ENCODE measurements at regions of chr4 and their contacts with region 1.

Region 1: DNA sequence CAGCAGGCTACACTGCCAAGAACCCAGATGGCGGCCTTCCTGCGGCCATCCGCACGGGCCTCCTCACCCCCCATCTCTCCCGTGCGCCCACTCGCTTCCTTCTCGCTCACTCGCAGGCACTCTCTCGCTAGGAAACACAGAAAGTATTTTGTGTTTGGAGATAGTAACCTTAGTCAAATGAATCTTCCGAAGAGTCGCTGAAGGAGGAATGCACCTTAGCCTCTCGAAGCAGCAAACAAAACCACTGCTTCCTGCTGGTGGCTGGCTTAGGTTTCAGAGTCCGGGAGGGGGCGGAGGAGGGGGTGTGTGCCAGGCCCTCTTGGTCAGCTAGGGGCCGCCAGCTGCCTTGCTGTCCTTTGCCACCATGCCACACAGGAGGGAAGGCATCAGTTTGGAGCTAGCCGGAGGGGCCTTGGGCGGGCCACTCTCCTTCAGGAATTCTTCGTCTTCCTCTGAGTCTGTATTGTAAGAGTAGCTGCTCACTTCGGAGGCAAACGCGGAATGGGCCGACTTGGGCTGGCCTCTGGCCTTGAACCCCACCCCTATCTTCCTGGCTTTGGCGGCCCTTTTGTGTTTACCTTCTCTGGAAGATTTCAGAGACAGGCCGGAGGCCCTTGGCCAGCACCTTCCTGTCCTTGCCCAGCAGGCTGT is 73.2 kb upstream of the UCP1 start:
- DNase-seq: peak; percentile 69 to 78 (median 72)
- H3K4me3 ChIP-seq: peak overlapping the region; percentile 16
- H3K27ac ChIP-seq: peak overlapping the region; percentile 44 to 81
- H3K4me1 ChIP-seq: peaks cover 11% of the 10 kb centered on the region
- H3K27me3 ChIP-seq: no peaks in the 10 kb centered on the region
- CTCF ChIP-seq: peak in 2 of 3 donors; percentile 10 to 47
- EP300 ChIP-seq: no peak
- POLR2A ChIP-seq: no peak

Region 2: DNA sequence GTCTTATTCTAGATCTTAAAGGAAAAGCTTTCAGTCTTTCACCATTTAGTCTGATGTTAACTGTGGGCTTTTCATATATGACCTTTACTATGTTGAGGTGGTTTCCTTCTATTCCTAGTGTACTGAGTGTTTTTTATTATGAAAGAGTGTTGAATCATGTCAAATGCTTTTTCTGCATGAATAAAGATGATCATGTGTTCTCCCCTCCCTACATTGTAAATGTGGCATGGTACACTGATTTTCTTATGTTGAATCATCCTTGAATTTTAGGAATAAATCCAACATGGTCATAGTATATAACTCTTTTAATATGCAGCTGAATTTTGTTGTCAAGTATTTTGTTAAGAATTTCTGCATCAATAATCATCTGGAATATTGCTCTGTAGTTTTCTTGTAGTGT is 218.8 kb before region 1 on chr4:
- intact Hi-C with region 1: no loop called
- DNase-seq: no peak
- H3K4me3 ChIP-seq: no peak overlapping the region
- H3K27ac ChIP-seq: no peak overlapping the region
- H3K4me1 ChIP-seq: peaks cover 5% of the 10 kb centered on the region
- H3K27me3 ChIP-seq: no peaks in the 10 kb centered on the region
- CTCF ChIP-seq: no peak
- EP300 ChIP-seq: no peak
- POLR2A ChIP-seq: no peak

Region 3: GRCh38 chr4:140523857-140524742 is 117.8 kb before region 1 on chr4 and contains the start of gene ELMOD2:
- intact Hi-C with region 1: no loop called
- DNase-seq: peak; percentile 97 to 99 (median 98)
- H3K4me3 ChIP-seq: peak within 1 kb of the TSS; percentile 83
- H3K27ac ChIP-seq: peak within 1 kb of the TSS in 1 of 2 donors; percentile 76
- H3K4me1 ChIP-seq: peaks cover 3% of the 10 kb centered on the region
- H3K27me3 ChIP-seq: no peaks in the 10 kb centered on the region
- CTCF ChIP-seq: peak; percentile 91 to 97 (median 92)
- EP300 ChIP-seq: no peak
- POLR2A ChIP-seq: no peak
- total RNA-seq, gene ELMOD2: 13.6 to 22.3 (median 15.9) TPM

Region 4: DNA sequence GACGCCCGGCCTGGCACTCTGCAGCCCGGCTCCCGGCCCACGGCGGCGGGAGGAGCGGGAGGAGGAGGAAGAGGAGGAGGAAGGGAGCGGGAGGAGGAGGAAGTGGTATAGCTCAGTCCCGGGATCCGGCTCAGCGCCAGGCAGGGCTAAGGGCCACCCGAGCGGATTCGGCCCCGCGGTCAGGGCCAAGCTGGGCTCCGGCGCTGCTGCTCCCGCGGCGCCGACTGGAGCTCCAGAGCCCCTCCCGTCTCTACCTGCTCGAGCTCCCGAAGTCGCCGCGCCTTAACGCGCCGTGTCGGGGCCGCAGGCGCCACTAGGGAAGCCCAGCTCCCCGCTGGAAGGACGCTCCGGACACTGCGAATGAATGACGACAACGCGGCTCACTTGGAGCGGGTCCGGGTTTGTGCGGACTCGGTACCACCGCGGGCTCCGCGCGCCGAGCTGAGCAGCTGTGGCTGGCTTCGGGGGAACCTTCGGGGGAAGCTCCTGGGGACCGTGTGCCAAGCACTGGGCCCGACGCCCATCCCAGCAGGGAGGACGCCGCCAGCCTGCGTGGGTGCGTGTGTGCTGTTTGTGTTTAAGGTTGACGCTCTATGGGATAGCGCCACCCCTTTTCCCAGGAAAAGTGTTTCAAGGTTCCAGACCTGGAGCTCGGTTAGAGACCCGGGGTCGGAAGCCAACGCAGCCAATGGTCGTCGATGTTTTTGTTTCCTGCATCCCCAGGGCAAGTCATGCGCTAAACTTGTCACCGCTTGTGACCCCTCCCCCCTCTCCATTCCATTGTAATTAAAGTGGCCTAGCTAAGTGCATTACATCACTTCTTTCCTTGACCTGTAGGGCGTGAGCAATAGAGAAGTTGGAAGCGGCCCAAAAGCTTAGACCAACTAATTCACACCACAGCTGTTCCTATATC is 114.7 kb after region 1 on chr4 and contains the start of gene TBC1D9:
- intact Hi-C with region 1: loop called in 2 of 4 experiments (anchors 5 to 10 kb)
- DNase-seq: peak; percentile 75 to 85 (median 84)
- H3K4me3 ChIP-seq: peak within 1 kb of the TSS; percentile 69
- H3K27ac ChIP-seq: peak within 1 kb of the TSS; percentile 87 to 91
- H3K4me1 ChIP-seq: no peaks in the 10 kb centered on the region
- H3K27me3 ChIP-seq: no peaks in the 10 kb centered on the region
- CTCF ChIP-seq: no peak
- EP300 ChIP-seq: no peak
- POLR2A ChIP-seq: peak; percentile 65
- total RNA-seq, gene TBC1D9: 14.9 to 28.8 (median 21.4) TPM

Region 5: DNA sequence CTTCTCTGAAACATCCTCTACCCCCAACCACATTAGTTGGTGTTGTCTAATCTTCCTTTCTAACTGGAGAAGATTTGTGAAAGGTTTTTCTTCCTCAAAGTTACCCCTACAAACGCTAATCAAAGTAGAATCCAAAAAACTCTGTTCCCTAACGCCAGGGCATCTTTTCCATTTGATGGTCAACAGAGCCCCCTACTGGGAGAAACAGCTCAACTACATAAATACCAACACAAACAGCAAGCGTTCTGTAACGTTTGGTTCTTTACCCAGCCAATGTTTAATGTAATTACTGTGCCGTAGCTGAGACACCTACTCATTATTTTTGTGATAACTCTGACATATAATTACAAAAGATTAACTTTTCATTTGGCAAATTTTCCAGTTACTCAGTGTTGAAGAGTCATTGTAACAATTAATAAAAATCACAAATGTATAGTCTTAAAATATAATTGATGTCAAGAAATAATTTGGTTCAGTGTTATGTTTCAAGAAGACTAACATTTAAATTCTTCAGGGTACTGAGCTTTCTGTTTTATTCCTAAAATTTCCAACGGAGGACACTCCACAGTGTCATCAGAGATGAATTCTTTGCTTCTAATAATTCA is 209.2 kb after region 1 on chr4:
- intact Hi-C with region 1: loop called in 1 of 4 experiments (anchors 10 kb)
- DNase-seq: peak in 4 of 5 donors; percentile 26 to 61 (median 27)
- H3K4me3 ChIP-seq: no peak overlapping the region
- H3K27ac ChIP-seq: no peak overlapping the region
- H3K4me1 ChIP-seq: no peaks in the 10 kb centered on the region
- H3K27me3 ChIP-seq: no peaks in the 10 kb centered on the region
- CTCF ChIP-seq: peak; percentile 44 to 92 (median 85)
- EP300 ChIP-seq: no peak
- POLR2A ChIP-seq: no peak